Ascending aorta (tissue), 2 donors: ENCODE measurements at regions of chr15 and their contacts with region 1.

Region 1: DNA sequence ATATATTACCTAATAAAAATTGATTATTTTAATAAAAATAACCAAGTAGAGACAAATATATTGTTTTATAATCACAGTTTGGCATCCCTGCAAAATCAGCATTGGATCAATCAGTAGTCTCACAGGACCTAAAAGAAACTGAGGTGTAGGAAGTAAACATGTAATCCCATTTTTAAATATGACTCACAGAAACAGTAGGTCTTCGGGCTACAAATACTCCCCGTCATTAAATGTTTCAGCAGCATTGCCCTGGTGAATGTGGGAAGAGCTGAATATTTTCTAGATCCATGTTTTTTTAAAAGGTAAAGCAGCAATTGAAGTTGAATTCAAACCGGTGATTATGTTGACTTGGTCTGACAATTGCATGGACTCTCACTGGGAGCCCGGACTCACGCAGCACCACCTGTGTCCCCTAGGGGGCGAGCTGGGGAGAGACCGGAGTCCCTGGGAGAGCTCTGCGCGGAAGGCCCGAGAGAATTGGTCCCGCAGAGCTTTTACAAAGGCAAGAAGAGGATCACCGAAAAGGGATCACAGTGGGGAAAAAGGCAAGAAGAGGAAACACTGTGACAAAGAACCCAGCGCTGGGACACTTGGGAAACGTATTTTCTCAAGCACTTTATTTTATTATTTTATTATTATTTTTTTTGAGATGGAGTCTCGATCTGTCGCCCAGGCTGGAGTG is 17.2 kb upstream of the USP3 start:
- DNase-seq: peak; percentile 45 to 94
- H3K4me3 ChIP-seq: no peak overlapping the region
- H3K27ac ChIP-seq: no peak overlapping the region
- H3K4me1 ChIP-seq: no peaks in the 10 kb centered on the region
- H3K27me3 ChIP-seq: no peaks in the 10 kb centered on the region
- CTCF ChIP-seq: peak; percentile 88 to 95 (median 90)

Region 2: GRCh38 chr15:63420333-63420747 is 66.9 kb before region 1 on chr15:
- intact Hi-C with region 1: no loop called
- DNase-seq: peak in 1 of 2 donors; percentile 15
- H3K4me3 ChIP-seq: no peak overlapping the region
- H3K27ac ChIP-seq: no peak overlapping the region
- H3K4me1 ChIP-seq: no peaks in the 10 kb centered on the region
- H3K27me3 ChIP-seq: no peaks in the 10 kb centered on the region
- CTCF ChIP-seq: no peak

Region 3: DNA sequence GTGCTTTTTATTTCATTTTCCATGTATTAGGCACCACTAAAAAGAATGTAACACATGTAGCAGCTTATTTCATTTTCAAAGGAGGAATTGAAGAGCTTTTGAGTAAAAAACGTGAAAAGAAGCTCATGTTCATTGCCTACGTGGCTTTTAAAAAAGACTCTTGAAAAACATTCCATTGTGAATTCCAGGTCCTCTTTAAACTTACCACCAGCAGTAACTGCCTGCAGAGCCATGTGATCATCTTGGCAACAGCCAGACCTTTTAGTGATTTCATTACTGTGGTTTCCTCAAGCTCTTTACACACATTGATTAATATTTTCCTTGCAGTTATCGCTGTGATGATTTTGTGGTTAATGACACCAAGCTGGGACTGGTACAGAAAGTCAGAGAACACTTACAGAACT is 66.2 kb after region 1 on chr15:
- intact Hi-C with region 1: loop called (anchors 5 kb)
- DNase-seq: no peak
- H3K4me3 ChIP-seq: peak overlapping the region in 1 of 2 donors; percentile 19
- H3K27ac ChIP-seq: peak overlapping the region; percentile 37 to 42
- H3K4me1 ChIP-seq: peaks cover 0 to 11% of the 10 kb centered on the region in 2 donors
- H3K27me3 ChIP-seq: no peaks in the 10 kb centered on the region
- CTCF ChIP-seq: no peak